ENCODE measurements at regions of chr5 and their contacts with region 1.

Region 1: GRCh38 chr5:141040771-141041426 is 10.3 kb upstream of the PCDHB1 start:
- DNase-seq: peak; percentile 72 to 87
- H3K4me3 ChIP-seq: peak overlapping the region; percentile 34; the same call in 1 of the 2 replicates
- H3K27ac ChIP-seq: no peak overlapping the region
- H3K4me1 ChIP-seq: no peaks in the 10 kb centered on the region
- H3K27me3 ChIP-seq: no peaks in the 10 kb centered on the region
- CTCF ChIP-seq: peak; percentile 80

Region 2: GRCh38 chr5:139593716-139594319 is 1447.1 kb before region 1 on chr5:
- CTCF ChIA-PET with region 1: no interaction called
- POLR2A ChIA-PET with region 1: no interaction called
- intact Hi-C with region 1: no loop called
- DNase-seq: peak; percentile 30 to 71
- H3K4me3 ChIP-seq: no peak overlapping the region
- H3K27ac ChIP-seq: peak overlapping the region; percentile 30
- H3K4me1 ChIP-seq: peaks cover 15% of the 10 kb centered on the region
- H3K27me3 ChIP-seq: no peaks in the 10 kb centered on the region
- CTCF ChIP-seq: no peak

Region 3: GRCh38 chr5:140794595-140795258 is 246.2 kb before region 1 on chr5 and contains the start of gene PCDHA2:
- CTCF ChIA-PET with region 1: no interaction called
- POLR2A ChIA-PET with region 1: no interaction called
- intact Hi-C with region 1: loop called (anchors 1 kb)
- DNase-seq: no peak
- H3K4me3 ChIP-seq: no peak within 1 kb of the TSS
- H3K27ac ChIP-seq: no peak within 1 kb of the TSS
- H3K4me1 ChIP-seq: no peaks in the 10 kb centered on the region
- H3K27me3 ChIP-seq: peaks cover under 1% of the 10 kb centered on the region; the same call in 1 of the 2 replicates
- CTCF ChIP-seq: no peak
- total RNA-seq, gene PCDHA2: not detected in 2 replicates

Region 4: DNA sequence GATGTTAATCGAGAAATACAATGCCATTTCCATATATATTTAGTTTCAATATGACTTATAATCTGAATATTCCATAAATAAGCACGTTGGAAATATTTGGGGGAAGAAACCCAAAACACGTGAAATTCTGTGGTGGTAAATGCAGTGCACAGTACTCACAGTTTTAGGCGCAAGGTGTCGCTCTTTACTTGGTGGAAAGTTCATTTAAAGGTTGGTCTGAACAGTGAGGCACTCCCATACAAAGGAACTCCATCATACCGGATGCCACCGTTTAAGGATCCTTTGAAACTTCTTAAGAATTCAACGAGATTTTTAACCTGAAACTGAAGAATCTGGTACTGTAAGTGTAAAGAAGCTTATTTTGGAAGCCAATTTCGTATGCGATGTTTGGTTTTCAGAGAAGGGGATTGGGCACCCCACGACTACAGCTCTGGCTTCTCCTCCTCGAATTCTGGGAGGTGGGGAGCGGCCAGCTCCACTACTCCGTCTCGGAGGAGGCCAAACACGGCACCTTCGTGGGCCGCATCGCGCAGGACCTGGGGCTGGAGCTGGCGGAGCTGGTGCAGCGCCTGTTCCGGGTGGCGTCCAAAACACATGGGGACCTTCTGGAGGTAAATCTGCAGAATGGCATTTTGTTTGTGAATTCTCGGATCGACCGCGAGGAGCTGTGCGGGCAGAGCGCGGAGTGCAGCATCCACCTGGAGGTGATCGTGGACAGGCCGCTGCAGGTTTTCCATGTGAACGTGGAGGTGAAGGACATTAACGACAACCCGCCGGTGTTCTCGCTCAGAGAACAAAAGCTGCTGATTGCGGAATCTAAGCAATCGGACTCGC is 172.0 kb before region 1 on chr5 and contains the start of gene PCDHA11:
- CTCF ChIA-PET with region 1: interaction called, 9 read pairs
- POLR2A ChIA-PET with region 1: no interaction called
- intact Hi-C with region 1: loop called (anchors 1 kb)
- DNase-seq: no peak
- H3K4me3 ChIP-seq: no peak within 1 kb of the TSS
- H3K27ac ChIP-seq: no peak within 1 kb of the TSS
- H3K4me1 ChIP-seq: no peaks in the 10 kb centered on the region
- H3K27me3 ChIP-seq: no peaks in the 10 kb centered on the region
- CTCF ChIP-seq: peak; percentile 44; the same call in 1 of the 2 replicates
- total RNA-seq, gene PCDHA11: not detected in 2 replicates

Region 5: DNA sequence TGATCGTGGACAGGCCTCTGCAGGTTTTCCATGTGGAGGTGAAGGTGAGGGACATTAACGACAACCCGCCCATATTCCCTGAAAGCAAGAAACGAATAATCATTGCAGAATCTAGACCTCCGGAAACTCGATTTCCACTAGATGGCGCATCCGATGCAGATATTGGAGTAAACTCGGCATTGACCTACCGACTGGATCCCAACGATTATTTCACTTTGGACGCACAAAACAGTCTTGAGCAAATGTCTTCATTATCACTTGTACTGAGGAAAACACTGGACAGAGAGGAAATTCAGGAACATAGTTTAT is 158.4 kb before region 1 on chr5:
- CTCF ChIA-PET with region 1: interaction called, 5 read pairs
- POLR2A ChIA-PET with region 1: no interaction called
- intact Hi-C with region 1: loop called (anchors 1 kb)
- DNase-seq: no peak
- H3K4me3 ChIP-seq: no peak overlapping the region
- H3K27ac ChIP-seq: no peak overlapping the region
- H3K4me1 ChIP-seq: no peaks in the 10 kb centered on the region
- H3K27me3 ChIP-seq: 0 out of 2 replicates have a peak, but pooled peaks cover under 1% of the 10 kb centered on the region
- CTCF ChIP-seq: 0 out of 2 replicates have a peak, but pooled peaks have one; percentile 26

Region 6: DNA sequence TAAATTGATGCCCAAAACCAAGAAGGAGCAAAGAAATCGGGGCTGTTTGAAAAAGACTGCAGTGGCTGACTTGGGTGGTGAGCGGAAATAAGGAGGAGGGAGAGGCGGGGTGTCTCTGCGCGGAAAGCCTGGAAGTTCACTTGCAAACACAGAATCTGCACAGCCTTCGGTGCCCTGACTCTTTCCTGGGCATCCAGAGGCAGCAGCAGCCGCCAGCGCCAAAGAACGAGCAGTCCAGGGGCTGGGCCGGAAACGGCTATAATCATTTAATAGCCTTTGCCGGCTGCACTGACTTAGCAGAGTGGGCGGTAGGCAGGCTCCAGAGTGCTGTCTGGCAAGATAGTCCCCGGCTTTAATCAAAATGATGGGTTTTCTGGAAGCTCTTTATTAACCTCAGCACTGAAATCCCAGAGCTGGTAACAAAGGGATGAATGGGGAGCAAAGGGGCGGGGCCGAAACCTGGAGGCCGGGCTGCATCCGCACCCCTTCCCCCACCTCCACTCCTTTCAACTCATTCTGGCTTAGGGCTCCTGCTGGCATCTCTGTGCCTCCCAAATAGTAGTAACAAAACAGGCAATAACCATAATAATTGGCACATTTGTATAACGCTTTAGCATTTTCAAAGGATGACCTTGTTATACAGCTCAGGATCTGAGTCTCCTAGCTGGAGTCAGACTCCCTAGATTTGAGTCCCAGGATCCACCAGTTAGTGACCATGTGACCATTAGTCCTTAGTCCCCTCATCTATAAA is 38.9 kb before region 1 on chr5:
- CTCF ChIA-PET with region 1: interaction called, 12 read pairs
- POLR2A ChIA-PET with region 1: no interaction called
- intact Hi-C with region 1: loop called (anchors 2 kb)
- DNase-seq: peak in 1 of 2 experiments; percentile 37
- H3K4me3 ChIP-seq: peak overlapping the region; percentile 41; the same call in 1 of the 2 replicates
- H3K27ac ChIP-seq: peak overlapping the region; percentile 43; the same call in 1 of the 2 replicates
- H3K4me1 ChIP-seq: peaks cover 16% of the 10 kb centered on the region; the same call in 1 of the 2 replicates
- H3K27me3 ChIP-seq: no peaks in the 10 kb centered on the region
- CTCF ChIP-seq: no peak

Region 7: GRCh38 chr5:141208478-141208877 is 167.6 kb after region 1 on chr5 and contains the start of gene PCDHB12:
- CTCF ChIA-PET with region 1: no interaction called
- POLR2A ChIA-PET with region 1: no interaction called
- intact Hi-C with region 1: no loop called
- DNase-seq: no peak
- H3K4me3 ChIP-seq: no peak within 1 kb of the TSS
- H3K27ac ChIP-seq: no peak within 1 kb of the TSS
- H3K4me1 ChIP-seq: no peaks in the 10 kb centered on the region
- H3K27me3 ChIP-seq: no peaks in the 10 kb centered on the region; the same call in 1 of the 2 replicates
- CTCF ChIP-seq: peak; percentile 52
- total RNA-seq, gene PCDHB12: not detected in 2 replicates

Measured in PC-9 (cell line).